Thyroid gland (tissue), 4 donors: ENCODE measurements at regions of chr13 and their contacts with region 1.

Region 1: GRCh38 chr13:90732049-90732448 is 615.4 kb upstream of the MIR17HG start:
- DNase-seq: peak; percentile 50 to 52
- H3K4me3 ChIP-seq: no peak overlapping the region
- H3K27ac ChIP-seq: no peak overlapping the region
- H3K4me1 ChIP-seq: no peaks in the 10 kb centered on the region
- H3K27me3 ChIP-seq: no peaks in the 10 kb centered on the region
- CTCF ChIP-seq: peak in 4 of 6 experiments; percentile 38 to 47 (median 42)
- POLR2A ChIP-seq: no peak

Region 2: DNA sequence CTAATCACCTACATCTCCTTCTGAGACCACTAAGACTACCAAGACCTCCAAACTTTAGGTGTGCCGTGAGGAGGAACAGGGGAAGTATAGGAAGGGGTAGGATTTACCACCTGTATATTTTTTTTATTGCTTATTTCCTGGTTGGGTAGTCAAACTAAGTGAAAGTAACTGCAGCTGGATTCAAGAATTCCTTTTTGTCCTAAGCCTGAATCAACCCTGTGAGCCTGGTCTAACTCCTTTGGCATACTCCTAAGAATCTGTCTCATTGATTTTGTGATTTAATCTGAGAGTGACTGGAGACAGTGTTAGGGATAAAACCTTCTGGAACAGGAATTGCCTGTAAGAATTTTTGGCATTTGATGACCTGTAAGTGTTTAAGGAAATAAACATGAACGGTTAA is 92.0 kb after region 1 on chr13:
- intact Hi-C with region 1: no loop called
- DNase-seq: no peak
- H3K4me3 ChIP-seq: no peak overlapping the region
- H3K27ac ChIP-seq: no peak overlapping the region
- H3K4me1 ChIP-seq: no peaks in the 10 kb centered on the region
- H3K27me3 ChIP-seq: no peaks in the 10 kb centered on the region
- CTCF ChIP-seq: no peak
- POLR2A ChIP-seq: no peak

Region 3: DNA sequence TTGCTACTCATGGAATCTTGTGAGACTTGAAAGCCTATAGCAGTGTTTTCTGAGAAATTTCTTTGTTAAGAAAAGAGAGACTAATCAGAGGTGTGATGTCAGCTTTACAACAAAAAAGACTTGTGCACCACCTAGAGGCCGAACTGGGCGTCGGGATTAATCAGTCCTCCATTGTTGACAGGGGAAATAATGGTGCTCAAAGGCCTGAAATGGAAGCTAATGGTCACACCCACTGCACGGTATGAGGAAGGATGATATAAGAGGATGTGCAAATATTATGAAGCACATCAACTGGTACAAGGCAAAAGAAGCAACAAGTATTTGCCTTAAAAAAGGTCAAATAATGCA is 135.3 kb after region 1 on chr13:
- intact Hi-C with region 1: loop called (anchors 5 kb)
- DNase-seq: peak; percentile 76 to 82
- H3K4me3 ChIP-seq: no peak overlapping the region
- H3K27ac ChIP-seq: peak overlapping the region; percentile 7 to 26 (median 18)
- H3K4me1 ChIP-seq: peaks cover 0 to 5% of the 10 kb centered on the region in 2 donors
- H3K27me3 ChIP-seq: no peaks in the 10 kb centered on the region
- CTCF ChIP-seq: peak; percentile 16 to 85 (median 70)
- POLR2A ChIP-seq: no peak